Kidney (tissue), 22 donors: ENCODE measurements at regions of chr19 and their contacts with region 1.

Region 1: DNA sequence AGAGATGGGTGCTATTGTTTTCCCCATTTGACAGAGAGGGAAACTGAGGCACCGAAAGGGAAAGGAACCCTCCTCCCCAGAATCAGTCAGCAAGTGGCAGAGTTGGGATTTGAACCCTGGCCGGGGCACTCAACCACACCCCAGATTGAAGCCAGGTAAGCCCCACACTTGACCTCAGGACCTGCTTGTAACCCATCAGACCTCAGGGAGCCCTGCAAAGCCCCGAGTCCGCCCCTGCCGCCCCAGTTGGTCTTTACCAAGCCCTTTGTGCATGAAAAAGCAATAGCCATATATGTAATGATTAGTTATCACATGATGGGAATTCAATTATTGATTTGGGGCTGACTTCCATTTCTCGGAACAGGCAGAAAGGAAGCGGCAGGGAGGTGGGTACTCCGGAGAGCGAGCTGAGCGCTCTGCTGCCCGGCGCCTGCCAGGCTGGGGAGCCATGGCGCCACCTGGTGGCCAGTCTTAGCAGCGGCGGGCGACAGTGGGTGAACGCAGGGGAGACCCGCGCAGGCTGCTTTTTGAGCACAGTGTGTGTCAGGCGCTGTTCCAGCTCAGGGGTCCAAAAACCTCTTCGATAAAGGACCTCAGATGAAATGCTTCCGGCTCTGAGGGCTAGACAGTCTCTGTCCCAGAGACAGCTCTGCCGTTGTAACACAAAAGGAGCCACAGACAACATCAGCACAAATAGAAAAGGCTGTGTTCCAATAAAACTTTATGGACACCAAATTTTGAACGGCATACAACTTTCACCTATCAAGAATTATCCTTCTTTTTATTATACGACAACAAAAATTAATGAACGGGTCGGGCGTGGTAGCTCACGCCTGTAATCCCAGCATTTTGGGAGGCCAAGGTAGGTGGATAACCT is 82.9 kb upstream of the CACNA1A start:
- DNase-seq: peak; percentile 69 to 86 (median 78)
- H3K4me3 ChIP-seq: no peak overlapping the region
- H3K27ac ChIP-seq: no peak overlapping the region
- H3K4me1 ChIP-seq: no peaks in the 10 kb centered on the region
- H3K27me3 ChIP-seq: no peaks in the 10 kb centered on the region
- CTCF ChIP-seq: peak; percentile 84

Region 2: GRCh38 chr19:13281567-13282291 is 307.5 kb before region 1 on chr19:
- intact Hi-C with region 1: loop called (anchors 10 kb)
- DNase-seq: peak in 1 of 5 donors; percentile 46
- H3K4me3 ChIP-seq: no peak overlapping the region
- H3K27ac ChIP-seq: no peak overlapping the region
- H3K4me1 ChIP-seq: no peaks in the 10 kb centered on the region
- H3K27me3 ChIP-seq: no peaks in the 10 kb centered on the region
- CTCF ChIP-seq: no peak

Region 3: DNA sequence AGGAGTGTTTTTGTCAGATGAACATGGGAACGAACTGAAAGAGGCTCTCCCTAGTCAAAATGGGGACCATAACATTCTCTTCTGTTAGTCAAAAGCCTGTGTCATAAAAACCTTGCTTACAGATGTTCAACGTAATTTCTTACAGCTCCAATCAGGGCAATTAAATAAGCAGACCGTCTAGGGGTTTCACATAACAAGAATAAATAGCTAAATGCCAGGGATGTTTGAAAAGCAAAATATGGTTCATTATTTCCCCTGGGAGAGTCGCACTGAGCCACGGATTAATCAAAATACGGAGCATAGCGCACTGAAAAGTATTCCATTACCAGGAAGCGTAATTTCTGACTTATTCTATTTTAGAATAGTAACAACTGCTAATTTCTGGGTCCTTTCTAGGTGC is 111.4 kb after region 1 on chr19:
- intact Hi-C with region 1: no loop called
- DNase-seq: no peak
- H3K4me3 ChIP-seq: no peak overlapping the region
- H3K27ac ChIP-seq: no peak overlapping the region
- H3K4me1 ChIP-seq: no peaks in the 10 kb centered on the region
- H3K27me3 ChIP-seq: no peaks in the 10 kb centered on the region
- CTCF ChIP-seq: no peak